ENCODE measurements at regions of chr18 and their contacts with region 1.

Region 1: GRCh38 chr18:60413944-60414547 is 41.5 kb upstream of the MC4R start:
- DNase-seq: no peak
- ATAC-seq: peak; percentile 74
- H3K4me3 ChIP-seq: no peak overlapping the region
- H3K27ac ChIP-seq: no peak overlapping the region
- H3K4me1 ChIP-seq: no peaks in the 10 kb centered on the region
- H3K27me3 ChIP-seq: no peaks in the 10 kb centered on the region
- CTCF ChIP-seq: peak; percentile 40 to 57 (median 50)
- EP300 ChIP-seq: no peak
- POLR2A ChIP-seq: no peak
- RAD21 ChIP-seq: peak; percentile 46

Region 2: GRCh38 chr18:59783138-59783537 is 630.9 kb before region 1 on chr18:
- CTCF ChIA-PET with region 1: no interaction called
- POLR2A ChIA-PET with region 1: no interaction called
- RAD21 ChIA-PET with region 1: no interaction called
- SMC1A ChIA-PET with region 1: no interaction called
- in situ Hi-C with region 1: no loop called
- intact Hi-C with region 1: loop called (anchors 10 kb)
- DNase-seq: peak; percentile 9
- ATAC-seq: peak; percentile 98
- H3K4me3 ChIP-seq: no peak overlapping the region
- H3K27ac ChIP-seq: no peak overlapping the region
- H3K4me1 ChIP-seq: no peaks in the 10 kb centered on the region
- H3K27me3 ChIP-seq: no peaks in the 10 kb centered on the region
- CTCF ChIP-seq: peak; percentile 63 to 71 (median 71); a peak in 5 of 6 replicates
- EP300 ChIP-seq: no peak
- POLR2A ChIP-seq: no peak
- RAD21 ChIP-seq: peak; percentile 81

Region 3: DNA sequence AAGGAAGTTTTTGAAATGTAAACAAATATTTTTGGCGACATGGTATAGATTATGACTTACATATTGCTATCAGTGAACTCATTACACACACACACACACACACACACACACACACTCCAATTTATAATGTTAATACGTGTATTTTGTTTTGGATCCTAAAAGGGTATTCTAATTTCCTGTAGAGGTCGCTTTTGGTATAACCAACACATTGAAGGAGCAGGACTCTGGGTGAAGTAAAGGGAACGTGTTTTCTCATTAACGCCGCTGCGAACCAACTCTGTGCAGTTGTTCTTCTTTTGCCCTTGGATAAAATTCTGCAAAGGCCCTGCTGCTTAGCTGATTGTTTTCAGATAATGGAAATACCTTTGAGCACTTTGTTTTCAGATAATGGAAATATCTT is 323.9 kb before region 1 on chr18:
- CTCF ChIA-PET with region 1: interaction called, 3 read pairs
- POLR2A ChIA-PET with region 1: no interaction called
- RAD21 ChIA-PET with region 1: no interaction called
- SMC1A ChIA-PET with region 1: no interaction called
- in situ Hi-C with region 1: no loop called
- intact Hi-C with region 1: loop called (anchors 1 kb)
- DNase-seq: no peak
- ATAC-seq: peak; percentile 68
- H3K4me3 ChIP-seq: no peak overlapping the region
- H3K27ac ChIP-seq: no peak overlapping the region
- H3K4me1 ChIP-seq: no peaks in the 10 kb centered on the region
- H3K27me3 ChIP-seq: no peaks in the 10 kb centered on the region; a peak in 1 of 4 replicates
- CTCF ChIP-seq: peak; percentile 21 to 33 (median 27); a peak in 2 of 6 replicates
- EP300 ChIP-seq: no peak
- POLR2A ChIP-seq: no peak
- RAD21 ChIP-seq: peak; percentile 46

Region 4: DNA sequence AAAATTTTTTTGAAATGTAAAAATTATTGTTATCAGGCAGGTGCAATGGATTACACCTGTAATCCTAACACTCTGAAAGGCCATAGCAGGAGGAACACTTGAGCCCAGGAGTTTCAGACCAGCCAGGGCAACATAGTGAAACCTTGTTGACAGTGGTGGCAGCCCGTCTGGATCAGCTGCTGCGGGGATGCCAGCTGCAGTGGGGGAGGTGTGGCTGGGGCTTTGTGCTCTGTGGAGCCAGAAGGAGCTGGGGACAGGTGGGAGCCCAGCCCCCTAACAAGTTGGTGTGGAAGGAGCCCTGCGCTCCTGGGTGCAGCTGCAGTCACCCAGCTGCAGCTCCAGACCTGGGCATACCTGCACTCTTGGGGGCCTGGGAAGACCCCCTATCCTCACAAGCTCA is 140.9 kb after region 1 on chr18:
- CTCF ChIA-PET with region 1: no interaction called
- POLR2A ChIA-PET with region 1: no interaction called
- RAD21 ChIA-PET with region 1: no interaction called
- SMC1A ChIA-PET with region 1: no interaction called
- in situ Hi-C with region 1: no loop called
- intact Hi-C with region 1: no loop called
- DNase-seq: no peak
- ATAC-seq: no peak; the same call in 2 of the 3 replicates
- H3K4me3 ChIP-seq: no peak overlapping the region
- H3K27ac ChIP-seq: no peak overlapping the region
- H3K4me1 ChIP-seq: no peaks in the 10 kb centered on the region
- H3K27me3 ChIP-seq: no peaks in the 10 kb centered on the region
- CTCF ChIP-seq: no peak
- EP300 ChIP-seq: no peak
- POLR2A ChIP-seq: no peak
- RAD21 ChIP-seq: no peak